A673 (cell line): ENCODE measurements at regions of chr1 and their contacts with region 1.

Region 1: GRCh38 chr1:158951956-158952355 is 20.6 kb downstream of the PYHIN1 start:
- DNase-seq: no peak
- H3K4me3 ChIP-seq: no peak overlapping the region
- H3K27ac ChIP-seq: no peak overlapping the region
- H3K4me1 ChIP-seq: no peaks in the 10 kb centered on the region
- H3K27me3 ChIP-seq: peaks cover 7% of the 10 kb centered on the region
- CTCF ChIP-seq: no peak

Region 2: DNA sequence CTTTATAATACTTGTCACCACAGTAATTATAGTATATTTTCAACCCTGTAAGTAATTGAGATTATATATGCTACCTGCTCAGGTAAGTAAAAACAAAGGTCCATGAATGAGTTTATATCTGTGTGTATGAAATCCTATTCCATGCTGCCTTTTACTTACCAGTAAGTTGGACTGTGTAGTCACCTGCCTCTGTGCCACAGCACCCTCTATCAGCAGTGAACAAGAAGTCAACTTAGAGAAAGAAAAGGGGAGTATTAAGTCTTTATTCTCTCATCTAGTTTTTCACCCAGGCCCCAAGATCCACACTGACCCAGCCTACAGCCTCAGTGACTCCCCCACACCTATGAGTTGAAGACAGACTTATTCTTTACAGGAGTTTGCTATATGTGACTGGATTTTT is 20.9 kb after region 1 on chr1:
- CTCF ChIA-PET with region 1: no interaction called
- POLR2A ChIA-PET with region 1: no interaction called
- intact Hi-C with region 1: no loop called
- DNase-seq: peak; percentile 4
- H3K4me3 ChIP-seq: no peak overlapping the region
- H3K27ac ChIP-seq: no peak overlapping the region
- H3K4me1 ChIP-seq: no peaks in the 10 kb centered on the region
- H3K27me3 ChIP-seq: peaks cover 21% of the 10 kb centered on the region
- CTCF ChIP-seq: peak; percentile 31; the same call in 1 of the 2 replicates

Region 3: DNA sequence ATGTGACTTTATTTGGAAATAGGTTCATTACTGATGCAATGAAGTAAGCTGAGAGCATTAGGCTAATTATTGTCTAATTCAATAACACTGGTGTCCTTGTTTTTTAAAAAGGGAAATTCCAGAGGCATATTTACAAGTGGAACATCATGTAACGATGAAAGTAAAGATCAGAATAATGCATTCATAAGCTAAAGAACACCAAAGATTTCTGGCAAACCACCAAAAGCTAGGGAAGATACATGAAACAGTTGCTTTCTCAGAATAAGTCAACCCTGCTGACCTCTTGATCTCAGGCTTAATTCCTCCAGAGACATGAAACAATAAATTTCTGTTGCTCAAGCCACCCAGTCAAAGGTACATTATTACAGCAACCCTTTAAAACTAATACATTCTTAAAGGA is 37.5 kb after region 1 on chr1:
- CTCF ChIA-PET with region 1: no interaction called
- POLR2A ChIA-PET with region 1: interaction called, 10 read pairs
- intact Hi-C with region 1: no loop called
- DNase-seq: no peak
- H3K4me3 ChIP-seq: no peak overlapping the region
- H3K27ac ChIP-seq: no peak overlapping the region
- H3K4me1 ChIP-seq: no peaks in the 10 kb centered on the region
- H3K27me3 ChIP-seq: peaks cover 10% of the 10 kb centered on the region
- CTCF ChIP-seq: no peak